Posterior vena cava (tissue), 2 donors: ENCODE measurements at regions of chr9 and their contacts with region 1.

Region 1: DNA sequence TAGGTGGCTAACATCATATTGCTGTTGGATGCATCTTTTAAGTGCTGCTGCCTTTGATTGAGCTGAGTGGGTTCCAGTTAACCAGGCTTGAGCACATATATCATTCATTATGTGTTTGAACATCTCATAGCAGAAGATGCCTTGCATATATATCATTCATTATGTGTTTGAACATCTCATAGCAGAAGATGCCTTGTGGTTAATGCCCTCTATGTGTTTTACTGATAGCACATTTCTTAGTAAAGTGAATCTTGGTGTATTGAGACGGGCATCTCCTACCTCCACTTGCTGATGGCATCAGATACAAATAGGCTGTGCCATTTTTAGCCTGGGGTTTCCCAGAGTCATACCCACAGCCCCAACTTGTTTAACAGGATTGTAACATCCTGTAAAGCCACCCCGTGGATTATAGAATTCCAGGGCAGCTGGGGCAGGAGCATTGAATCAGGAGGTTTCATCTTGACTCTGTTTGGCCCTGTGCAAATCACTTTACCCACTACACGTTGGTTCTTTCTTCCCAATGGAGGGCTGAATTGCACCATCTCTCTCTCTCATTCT is 26.5 kb downstream of the MTAP start:
- DNase-seq: no peak

Region 2: DNA sequence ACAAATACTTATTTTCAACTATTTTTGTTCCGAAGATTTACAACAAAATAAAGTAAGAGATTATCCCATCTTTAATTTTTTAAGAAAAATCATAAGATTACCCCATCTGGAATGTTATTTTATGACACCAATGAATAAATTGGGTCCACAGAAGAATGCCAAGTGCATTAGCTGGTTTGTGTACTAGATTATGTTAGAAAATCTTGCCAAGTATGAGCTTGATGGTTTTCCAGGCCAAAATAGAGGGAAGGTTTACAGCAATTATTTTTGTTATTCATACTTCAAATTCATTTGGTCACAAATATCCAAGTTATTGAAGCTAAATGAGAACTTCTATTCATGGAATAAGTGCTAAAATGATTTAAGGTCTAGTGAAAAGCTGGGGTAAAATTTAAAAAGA is 508.3 kb after region 1 on chr9:
- intact Hi-C with region 1: loop called in 1 of 2 experiments (anchors 5 kb)
- DNase-seq: no peak